ENCODE measurements at regions of chr15 and their contacts with region 1.

Region 1: DNA sequence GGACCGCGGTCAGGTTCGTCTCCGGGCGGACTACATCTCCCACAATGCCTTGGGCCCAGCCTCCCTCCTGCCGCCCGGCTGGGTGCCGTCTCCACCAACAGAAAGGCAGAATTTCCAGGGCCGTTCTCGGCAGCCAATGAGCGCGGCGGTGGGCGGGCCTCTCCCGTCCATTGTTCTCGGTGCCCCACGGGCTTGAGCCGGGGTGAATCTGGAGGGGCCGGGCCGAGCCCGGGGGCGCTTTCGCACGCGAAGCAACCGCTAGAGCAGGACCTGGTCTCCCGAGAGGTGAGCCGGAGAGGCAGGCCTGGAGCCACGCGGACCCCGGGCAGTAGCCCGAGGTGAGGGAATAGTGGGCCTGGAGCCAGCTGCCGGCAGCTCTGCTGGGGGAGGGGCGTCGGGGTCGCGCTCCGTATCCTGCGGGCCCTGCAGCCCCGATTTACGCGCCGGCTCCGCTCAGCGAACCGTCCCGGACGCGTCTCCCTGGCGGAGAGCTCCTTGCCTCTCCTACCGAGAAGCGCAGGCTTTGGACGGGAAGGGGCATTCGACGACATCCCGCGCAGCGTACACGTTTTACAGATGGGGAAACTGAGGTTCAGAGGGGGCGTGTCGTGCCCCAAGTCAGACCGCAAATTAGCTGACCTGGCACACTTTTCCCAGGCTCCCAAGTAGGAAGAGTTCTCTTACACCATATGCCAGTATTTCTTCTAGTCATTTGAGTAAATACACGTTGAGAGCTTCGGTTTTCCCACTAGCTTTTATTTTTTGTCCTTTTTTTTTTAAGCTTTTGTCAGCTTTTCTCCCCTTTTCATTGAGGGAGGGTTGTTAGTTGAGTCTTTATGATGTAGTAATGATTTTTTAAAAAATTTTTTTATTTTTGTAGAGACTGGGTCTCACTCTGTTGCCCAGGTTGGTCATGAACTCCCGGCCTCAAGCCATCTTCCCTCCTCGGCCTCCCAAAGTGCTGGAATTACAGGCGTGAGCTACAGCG is at the start of gene ZSCAN2:
- DNase-seq: peak; percentile 96 to 98 (median 97)
- ATAC-seq: peak; percentile 99
- H3K4me3 ChIP-seq: peak within 1 kb of the TSS; percentile 64
- H3K27ac ChIP-seq: peak within 1 kb of the TSS; percentile 21
- H3K4me1 ChIP-seq: peaks cover 2% of the 10 kb centered on the region
- H3K27me3 ChIP-seq: no peaks in the 10 kb centered on the region
- total RNA-seq, gene ZSCAN2: 3.6 to 6.4 (median 5.2) TPM

Region 2: GRCh38 chr15:84552896-84553295 is 48.2 kb before region 1 on chr15:
- intact Hi-C with region 1: no loop called
- DNase-seq: no peak
- ATAC-seq: no peak
- H3K4me3 ChIP-seq: no peak overlapping the region
- H3K27ac ChIP-seq: no peak overlapping the region
- H3K4me1 ChIP-seq: no peaks in the 10 kb centered on the region
- H3K27me3 ChIP-seq: no peaks in the 10 kb centered on the region

Region 3: DNA sequence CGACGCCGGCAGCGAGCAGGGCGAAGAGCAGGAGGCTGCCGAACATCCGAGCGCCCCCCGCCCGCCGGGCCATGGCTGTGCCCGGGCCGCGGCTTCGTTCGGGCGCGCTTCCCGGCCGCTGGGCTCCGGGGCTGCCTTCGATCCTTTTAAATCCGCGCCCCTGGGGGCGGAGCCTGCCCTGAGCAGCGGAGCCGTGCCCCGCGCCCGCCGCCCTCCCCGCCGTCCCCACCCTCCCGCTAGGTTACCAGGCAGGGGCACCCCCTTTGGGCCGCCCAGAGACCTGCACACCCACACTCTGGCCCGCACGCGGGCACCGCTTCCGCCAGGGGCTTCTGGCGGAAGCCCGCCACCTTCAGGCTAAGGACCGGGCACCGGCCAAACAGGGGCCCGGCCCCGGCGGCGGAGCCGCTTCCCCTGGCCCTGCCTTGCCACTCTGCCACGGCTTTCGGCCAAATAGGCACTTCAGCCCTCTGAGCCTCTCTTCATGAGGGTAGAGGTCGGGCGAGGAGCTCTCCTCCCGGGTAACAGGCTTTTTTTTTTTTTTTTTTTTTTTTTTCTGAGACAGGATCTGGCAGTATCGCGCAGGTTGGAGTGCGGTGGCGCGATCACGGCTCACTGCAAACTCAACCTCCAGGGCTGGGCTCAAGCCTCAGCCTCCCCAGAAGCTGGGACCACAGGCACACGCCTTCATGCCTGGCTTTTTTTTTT is 57.1 kb after region 1 on chr15 and contains the start of gene NMB:
- intact Hi-C with region 1: loop called in 1 of 4 experiments (anchors 10 kb)
- DNase-seq: peak; percentile 81 to 91 (median 90)
- ATAC-seq: peak; percentile 70 to 75
- H3K4me3 ChIP-seq: peak within 1 kb of the TSS; percentile 65
- H3K27ac ChIP-seq: peak within 1 kb of the TSS; percentile 70
- H3K4me1 ChIP-seq: peaks cover 14% of the 10 kb centered on the region
- H3K27me3 ChIP-seq: no peaks in the 10 kb centered on the region
- total RNA-seq, gene NMB: 0.96 to 4.7 (median 2.1) TPM

Region 4: GRCh38 chr15:84783496-84784251 is 182.5 kb after region 1 on chr15:
- intact Hi-C with region 1: no loop called
- DNase-seq: peak in 1 of 3 donors; percentile 35
- ATAC-seq: no peak
- H3K4me3 ChIP-seq: no peak overlapping the region
- H3K27ac ChIP-seq: no peak overlapping the region
- H3K4me1 ChIP-seq: peaks cover 13% of the 10 kb centered on the region
- H3K27me3 ChIP-seq: no peaks in the 10 kb centered on the region

Region 5: DNA sequence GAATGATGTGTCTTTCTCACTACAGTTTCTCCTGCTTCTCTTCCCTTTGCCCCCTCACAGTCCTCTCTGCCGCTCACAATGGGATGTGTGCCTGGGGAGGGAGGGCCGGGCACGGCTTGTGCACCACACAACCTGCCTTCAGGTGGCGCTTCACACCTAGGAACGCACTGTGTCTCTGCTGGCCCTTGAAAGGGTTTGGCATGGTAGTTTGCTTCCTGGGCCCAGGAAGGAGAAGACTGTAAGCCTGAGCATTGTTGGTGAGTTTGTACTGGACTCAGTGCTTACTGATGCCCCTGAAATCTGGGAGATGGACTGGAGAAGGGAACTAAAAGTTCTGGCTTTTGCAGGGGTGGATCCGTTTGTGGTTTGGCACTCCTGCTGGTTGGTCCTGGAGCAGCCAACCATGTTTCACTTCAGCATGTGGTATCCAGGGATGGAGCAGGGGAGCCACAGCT is 225.3 kb after region 1 on chr15:
- intact Hi-C with region 1: loop called in 1 of 4 experiments (anchors 10 kb)
- DNase-seq: peak in 2 of 3 donors; percentile 47 to 78
- ATAC-seq: peak; percentile 4 to 22
- H3K4me3 ChIP-seq: no peak overlapping the region
- H3K27ac ChIP-seq: peak overlapping the region; percentile 32
- H3K4me1 ChIP-seq: peaks cover 34% of the 10 kb centered on the region
- H3K27me3 ChIP-seq: no peaks in the 10 kb centered on the region

Region 6: GRCh38 chr15:84929744-84930371 is 328.7 kb after region 1 on chr15:
- intact Hi-C with region 1: loop called in 3 of 4 experiments (anchors 5 kb)
- DNase-seq: no peak
- ATAC-seq: no peak
- H3K4me3 ChIP-seq: no peak overlapping the region
- H3K27ac ChIP-seq: no peak overlapping the region
- H3K4me1 ChIP-seq: peaks cover 4% of the 10 kb centered on the region
- H3K27me3 ChIP-seq: no peaks in the 10 kb centered on the region

Region 7: DNA sequence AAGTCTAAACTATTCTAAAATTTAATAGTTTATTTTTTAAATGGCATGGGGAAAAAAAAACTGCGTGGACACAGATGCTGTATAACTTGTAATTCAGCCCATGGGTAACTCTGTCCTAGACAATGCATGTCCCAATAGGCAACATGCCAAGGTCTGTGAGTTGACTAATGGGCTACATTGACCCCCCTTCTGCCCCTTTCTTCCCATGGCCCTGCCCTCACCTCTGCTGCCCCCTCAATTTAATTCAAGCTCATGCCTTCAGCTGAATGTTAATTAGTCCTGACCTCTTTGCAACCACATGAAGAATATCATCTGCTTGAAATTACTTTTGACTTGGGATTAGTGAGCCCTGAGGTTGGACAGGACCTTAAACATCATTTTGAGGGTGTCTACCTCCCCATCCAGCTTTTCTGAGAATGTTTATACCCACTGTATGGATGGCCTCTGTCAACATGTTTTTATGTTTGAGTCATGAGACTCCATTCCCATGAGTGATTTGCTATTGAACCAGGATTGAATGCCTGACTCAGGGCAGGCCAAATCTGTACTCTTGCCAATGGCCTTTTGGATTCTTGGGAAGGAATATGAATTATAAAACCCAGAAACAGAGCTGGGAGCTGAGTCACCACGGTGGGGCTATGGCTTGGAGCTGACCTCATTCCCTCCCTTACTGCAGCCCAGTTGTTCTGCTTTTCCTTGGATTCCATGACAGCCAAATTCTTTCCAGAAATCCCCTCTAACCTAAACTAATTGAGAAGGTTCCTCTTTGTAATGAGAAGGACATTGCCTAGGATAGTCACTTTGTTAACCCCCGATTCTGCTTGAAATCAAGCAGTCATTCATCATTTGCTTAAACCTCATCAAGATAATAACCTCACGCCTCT is 347.0 kb after region 1 on chr15:
- intact Hi-C with region 1: loop called in 1 of 4 experiments (anchors 10 kb)
- DNase-seq: peak; percentile 62 to 78 (median 66)
- ATAC-seq: peak; percentile 74 to 78
- H3K4me3 ChIP-seq: no peak overlapping the region
- H3K27ac ChIP-seq: peak overlapping the region; percentile 45
- H3K4me1 ChIP-seq: peaks cover 5% of the 10 kb centered on the region
- H3K27me3 ChIP-seq: no peaks in the 10 kb centered on the region

Region 8: DNA sequence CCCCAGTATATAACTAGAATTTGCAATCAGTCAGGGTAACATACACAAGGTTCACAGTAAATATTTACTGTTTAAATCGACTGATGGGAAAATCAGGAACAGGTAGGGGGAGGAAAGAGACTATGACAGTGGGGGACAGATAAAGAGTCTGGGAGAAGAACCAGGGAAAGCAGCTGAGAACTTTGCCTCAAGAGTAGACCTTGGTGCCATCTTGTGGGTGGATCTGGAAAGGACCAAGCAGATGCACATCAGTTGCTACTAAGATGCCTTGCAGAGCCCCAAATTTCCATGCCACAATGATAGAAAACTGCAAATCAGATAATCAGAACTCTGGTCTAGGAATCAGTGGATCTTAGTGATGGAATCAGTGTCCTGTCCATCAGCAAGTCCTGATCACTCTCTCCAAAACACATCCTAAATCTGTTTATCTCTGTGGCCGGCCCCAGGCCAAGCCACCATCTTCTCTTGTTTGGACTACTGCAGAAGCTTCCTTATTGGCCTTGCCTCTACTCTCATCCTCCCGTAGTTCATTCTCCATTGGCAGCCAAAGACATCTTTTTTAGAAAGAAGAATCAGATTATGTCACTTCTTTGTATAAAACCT is 443.2 kb after region 1 on chr15:
- intact Hi-C with region 1: loop called in 1 of 4 experiments (anchors 10 kb)
- DNase-seq: peak in 2 of 3 donors; percentile 44 to 73
- ATAC-seq: peak; percentile 79 to 84
- H3K4me3 ChIP-seq: no peak overlapping the region
- H3K27ac ChIP-seq: no peak overlapping the region
- H3K4me1 ChIP-seq: peaks cover 2% of the 10 kb centered on the region
- H3K27me3 ChIP-seq: no peaks in the 10 kb centered on the region